ENCODE measurements at regions of chr17 and their contacts with region 1.

Region 1: DNA sequence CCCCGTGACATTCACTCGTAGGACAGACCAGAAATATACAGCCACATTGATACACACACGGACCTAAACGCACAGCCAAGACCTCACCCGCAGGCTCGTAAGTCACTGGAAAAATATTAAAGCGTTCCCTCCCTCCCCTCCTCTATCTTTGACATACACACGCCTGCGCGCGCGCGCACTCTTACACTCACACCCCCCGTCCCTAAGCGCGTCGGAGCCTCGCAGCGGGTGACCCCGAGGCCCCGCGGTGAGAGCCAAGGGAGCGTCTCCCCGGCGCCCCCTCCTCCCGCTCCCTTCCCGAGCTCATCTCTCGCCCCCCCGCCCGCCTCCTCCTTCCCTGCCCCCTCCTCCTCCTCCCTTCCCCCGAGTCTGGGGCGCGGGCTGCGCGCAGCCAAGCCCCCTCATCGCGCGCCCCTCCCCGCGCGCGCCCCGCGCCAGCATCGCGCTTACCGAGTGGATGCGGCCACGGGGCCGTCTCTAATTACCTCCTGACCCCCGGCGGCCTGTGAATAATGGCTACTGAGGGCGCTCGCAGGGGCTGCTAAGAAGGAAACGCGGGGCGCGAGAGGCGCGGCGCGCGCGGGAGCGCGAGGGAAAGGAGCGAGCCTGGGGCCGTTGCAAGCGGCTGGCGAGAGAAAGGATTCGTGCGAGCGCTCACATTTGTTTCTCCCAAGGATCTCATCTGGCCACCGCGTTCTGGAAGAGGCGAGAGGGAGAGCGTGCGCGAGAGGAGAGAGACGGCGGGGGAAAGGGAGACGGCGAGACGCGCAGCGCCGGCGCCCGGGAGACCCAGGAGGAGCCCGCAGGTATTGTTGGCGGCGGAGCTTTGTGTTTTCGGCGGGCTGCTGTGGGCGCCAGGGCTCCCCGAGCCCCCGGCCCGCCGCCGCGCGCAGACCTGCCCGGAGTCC is 42.4 kb downstream of the RAI1 start:
- DNase-seq: no peak
- ATAC-seq: no peak
- H3K4me3 ChIP-seq: no peak overlapping the region
- H3K27ac ChIP-seq: no peak overlapping the region
- H3K4me1 ChIP-seq: peaks cover 29% of the 10 kb centered on the region
- H3K27me3 ChIP-seq: no peaks in the 10 kb centered on the region
- CTCF ChIP-seq: no peak
- EP300 ChIP-seq: no peak
- POLR2A ChIP-seq: no peak
- RAD21 ChIP-seq: no peak

Region 2: DNA sequence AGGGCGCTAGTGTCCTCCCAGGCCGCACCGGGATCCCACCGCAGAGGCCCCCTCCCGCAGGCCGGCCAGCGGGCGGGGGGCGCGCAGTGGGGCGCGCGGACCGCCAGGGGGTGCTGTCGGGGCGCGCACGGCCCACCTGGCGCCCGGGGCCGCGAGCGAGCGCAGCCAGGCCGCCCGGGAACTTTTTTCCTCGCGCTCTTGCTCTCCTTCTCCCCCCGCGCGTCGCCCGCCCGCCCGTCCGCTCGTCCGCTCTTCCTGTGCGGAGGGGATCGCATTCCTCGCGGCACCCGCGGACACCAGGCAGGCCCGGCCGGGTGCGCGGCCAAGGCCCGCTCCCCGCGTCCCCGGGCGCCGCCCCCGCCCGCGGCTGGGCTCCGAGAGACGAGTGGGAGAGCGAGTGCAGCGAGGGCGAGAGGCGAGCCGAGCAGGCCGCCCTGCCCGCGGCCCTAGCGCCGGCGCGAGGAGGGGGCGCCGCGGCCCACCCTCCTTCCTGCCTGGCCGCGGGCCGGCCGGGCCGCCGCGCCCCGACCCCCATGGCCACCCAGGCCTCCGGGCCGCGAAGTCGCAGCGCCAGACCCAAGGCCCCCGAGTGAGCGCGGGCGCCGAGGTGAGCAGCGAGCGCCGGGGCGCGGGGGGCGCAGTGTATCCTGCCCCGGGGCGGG is 42.3 kb before region 1 on chr17 and contains the start of gene RAI1:
- CTCF ChIA-PET with region 1: no interaction called
- POLR2A ChIA-PET with region 1: no interaction called
- in situ Hi-C with region 1: loop called (anchors 5 kb)
- intact Hi-C with region 1: loop called (anchors 5 kb)
- DNase-seq: peak; percentile 56
- ATAC-seq: peak; percentile 68
- H3K4me3 ChIP-seq: peak within 1 kb of the TSS; percentile 90 to 96 (median 95)
- H3K27ac ChIP-seq: peak within 1 kb of the TSS; percentile 82
- H3K4me1 ChIP-seq: peaks cover 59% of the 10 kb centered on the region
- H3K27me3 ChIP-seq: no peaks in the 10 kb centered on the region; a peak in 1 of 5 replicates
- CTCF ChIP-seq: peak; percentile 64
- EP300 ChIP-seq: no peak
- POLR2A ChIP-seq: no peak; a peak in 1 of 4 replicates
- RAD21 ChIP-seq: peak; percentile 99
- total RNA-seq, gene RAI1: 5.1 and 5.2 TPM in 2 replicates

Region 3: GRCh38 chr17:17739388-17740066 is 15.9 kb after region 1 on chr17:
- CTCF ChIA-PET with region 1: no interaction called
- POLR2A ChIA-PET with region 1: no interaction called
- in situ Hi-C with region 1: no loop called
- intact Hi-C with region 1: no loop called
- DNase-seq: no peak
- ATAC-seq: peak; percentile 34; the same call in 2 of the 3 replicates
- H3K4me3 ChIP-seq: no peak overlapping the region
- H3K27ac ChIP-seq: no peak overlapping the region
- H3K4me1 ChIP-seq: peaks cover 22% of the 10 kb centered on the region
- H3K27me3 ChIP-seq: no peaks in the 10 kb centered on the region
- CTCF ChIP-seq: 0 out of 2 replicates have a peak, but pooled peaks have one; percentile 8
- EP300 ChIP-seq: no peak
- POLR2A ChIP-seq: no peak
- RAD21 ChIP-seq: no peak

Region 4: GRCh38 chr17:17749921-17750320 is 26.3 kb after region 1 on chr17:
- CTCF ChIA-PET with region 1: no interaction called
- POLR2A ChIA-PET with region 1: no interaction called
- in situ Hi-C with region 1: no loop called
- intact Hi-C with region 1: no loop called
- DNase-seq: peak; percentile 36
- ATAC-seq: no peak
- H3K4me3 ChIP-seq: no peak overlapping the region
- H3K27ac ChIP-seq: no peak overlapping the region
- H3K4me1 ChIP-seq: peaks cover 27% of the 10 kb centered on the region
- H3K27me3 ChIP-seq: no peaks in the 10 kb centered on the region
- CTCF ChIP-seq: no peak
- EP300 ChIP-seq: no peak
- POLR2A ChIP-seq: no peak
- RAD21 ChIP-seq: no peak

Region 5: GRCh38 chr17:17940451-17940911 is 216.9 kb after region 1 on chr17:
- CTCF ChIA-PET with region 1: no interaction called
- POLR2A ChIA-PET with region 1: no interaction called
- in situ Hi-C with region 1: no loop called
- intact Hi-C with region 1: no loop called
- DNase-seq: no peak
- ATAC-seq: no peak
- H3K4me3 ChIP-seq: no peak overlapping the region
- H3K27ac ChIP-seq: no peak overlapping the region
- H3K4me1 ChIP-seq: peaks cover 71% of the 10 kb centered on the region
- H3K27me3 ChIP-seq: no peaks in the 10 kb centered on the region
- CTCF ChIP-seq: no peak
- EP300 ChIP-seq: no peak
- POLR2A ChIP-seq: no peak
- RAD21 ChIP-seq: no peak

Measured in HepG2 (cell line).